HEK293T (cell line): ENCODE measurements at regions of chr14 and their contacts with region 1.

Region 1: GRCh38 chr14:22900081-22900799 is 17.2 kb downstream of the REM2 start:
- DNase-seq: peak; percentile 65

Region 2: GRCh38 chr14:22715186-22715812 is 184.9 kb before region 1 on chr14:
- CTCF ChIA-PET with region 1: no interaction called
- POLR2A ChIA-PET with region 1: no interaction called
- DNase-seq: no peak

Region 3: GRCh38 chr14:22886500-22887259 is 13.6 kb before region 1 on chr14:
- CTCF ChIA-PET with region 1: interaction called, 6 read pairs
- POLR2A ChIA-PET with region 1: interaction called, 13 read pairs
- DNase-seq: peak; percentile 75